Common myeloid progenitor, CD34-positive (primary cell): ENCODE measurements at regions of chr1 and their contacts with region 1.

Region 1: DNA sequence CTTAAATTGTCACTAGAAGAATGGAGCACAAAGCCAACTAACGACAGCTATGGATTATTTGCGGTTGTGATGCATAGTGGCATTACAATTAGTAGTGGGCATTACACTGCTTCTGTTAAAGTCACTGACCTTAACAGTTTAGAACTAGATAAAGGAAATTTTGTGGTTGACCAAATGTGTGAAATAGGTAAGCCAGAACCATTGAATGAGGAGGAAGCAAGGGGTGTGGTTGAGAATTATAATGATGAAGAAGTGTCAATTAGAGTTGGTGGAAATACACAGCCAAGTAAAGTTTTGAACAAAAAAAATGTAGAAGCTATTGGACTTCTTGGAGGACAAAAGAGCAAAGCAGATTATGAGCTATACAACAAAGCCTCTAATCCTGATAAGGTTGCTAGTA is 13.5 kb downstream of the USP1 start:
- DNase-seq: no peak
- H3K4me3 ChIP-seq: no peak overlapping the region
- H3K27ac ChIP-seq: no peak overlapping the region
- H3K4me1 ChIP-seq: peaks cover 0 to 2% (median 0%) of the 10 kb centered on the region in 4 experiments
- H3K27me3 ChIP-seq: no peaks in the 10 kb centered on the region

Region 2: GRCh38 chr1:62424411-62424810 is 25.9 kb before region 1 on chr1:
- CTCF ChIA-PET with region 1: no interaction called
- POLR2A ChIA-PET with region 1: no interaction called
- DNase-seq: peak in 2 of 3 donors; percentile 6 to 15
- H3K4me3 ChIP-seq: no peak overlapping the region
- H3K27ac ChIP-seq: no peak overlapping the region
- H3K4me1 ChIP-seq: peaks cover 0 to 15% (median 9%) of the 10 kb centered on the region in 4 experiments
- H3K27me3 ChIP-seq: no peaks in the 10 kb centered on the region

Region 3: DNA sequence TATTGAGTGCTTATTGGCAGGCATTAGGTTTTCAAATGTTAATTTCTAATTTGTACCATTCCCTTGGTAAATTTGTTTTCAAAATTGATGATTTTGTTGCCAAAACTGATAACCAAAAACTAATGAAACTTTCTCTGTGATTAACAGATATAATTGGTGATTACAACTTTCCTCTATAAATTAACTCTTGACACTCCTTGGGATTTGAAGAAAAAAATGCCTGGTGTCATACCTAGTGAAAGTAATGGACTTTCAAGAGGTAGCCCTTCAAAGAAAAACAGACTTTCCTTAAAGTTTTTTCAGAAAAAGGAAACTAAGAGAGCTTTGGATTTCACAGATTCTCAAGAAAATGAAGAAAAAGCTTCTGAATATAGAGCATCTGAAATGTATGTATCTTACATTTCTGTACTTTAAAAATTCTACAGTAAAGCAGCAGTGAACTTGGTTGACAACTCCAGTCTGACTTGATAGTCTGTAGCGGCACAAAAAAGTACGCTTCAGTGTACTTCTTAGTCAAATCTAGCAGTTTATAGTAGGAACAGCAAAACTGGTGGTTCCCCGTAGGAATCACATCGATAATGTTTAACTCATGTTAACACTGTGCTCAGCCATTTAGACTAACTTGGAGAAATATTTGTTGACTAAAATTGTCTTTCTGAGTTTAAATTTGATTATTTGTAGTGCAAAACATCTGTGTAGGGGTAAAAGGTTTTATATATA is 10.5 kb before region 1 on chr1:
- CTCF ChIA-PET with region 1: interaction called, 10 read pairs
- POLR2A ChIA-PET with region 1: interaction called, 4 read pairs
- DNase-seq: peak in 2 of 3 donors; percentile 59 to 61
- H3K4me3 ChIP-seq: peak overlapping the region in 3 of 7 experiments; percentile 14 to 82 (median 19)
- H3K27ac ChIP-seq: peak overlapping the region; percentile 33 to 46
- H3K4me1 ChIP-seq: peaks cover 22 to 37% (median 25%) of the 10 kb centered on the region in 4 experiments
- H3K27me3 ChIP-seq: no peaks in the 10 kb centered on the region